Activated B cell treated with CpG ODN at 0.5 μM for 24 hours (primary cell): ENCODE measurements at regions of chr15 and their contacts with region 1.

Region 1: DNA sequence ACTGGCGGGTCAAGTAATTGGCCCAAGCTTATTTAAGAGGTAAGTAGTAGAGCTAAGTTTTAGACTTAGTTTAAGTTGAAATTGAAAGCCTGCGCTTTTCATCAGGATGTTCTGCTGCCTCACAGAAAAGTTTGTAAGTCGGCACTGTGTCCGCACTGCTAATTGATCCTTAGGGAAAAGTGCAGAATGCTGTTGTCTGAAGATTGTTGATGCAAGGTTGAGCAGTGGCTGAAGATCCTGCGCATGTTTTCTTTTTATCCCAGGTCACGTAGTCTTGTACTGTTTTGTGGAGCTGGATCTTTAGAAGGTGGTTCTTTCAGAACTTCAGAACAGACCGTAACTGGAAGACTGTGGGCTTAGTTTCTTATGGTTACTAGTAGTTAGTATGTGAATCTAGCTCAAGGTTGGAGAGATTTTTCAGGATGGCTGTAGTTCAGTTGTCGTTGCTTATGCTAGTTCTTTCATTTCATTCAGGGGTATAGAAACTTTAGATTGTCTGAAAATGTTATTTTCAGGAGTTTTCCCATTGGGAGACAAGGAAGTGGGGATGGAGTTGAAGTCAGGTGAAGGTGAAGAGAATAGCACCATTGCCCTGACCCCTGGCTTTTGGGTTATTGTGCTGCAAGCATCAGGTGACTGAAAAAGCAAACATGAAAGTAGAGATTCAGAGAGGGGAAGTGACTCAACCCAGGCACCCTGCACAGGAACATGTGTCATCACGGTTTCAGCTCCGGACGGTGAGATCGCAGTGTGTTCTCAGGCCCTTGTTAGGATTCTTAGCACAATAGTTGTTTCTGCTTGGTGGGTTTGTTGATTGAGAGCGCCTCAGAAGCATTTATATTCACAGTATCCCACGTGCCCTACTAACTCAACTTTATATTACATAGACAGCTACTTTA is 32.8 kb downstream of the AKAP13 start:
- DNase-seq: peak; percentile 50
- ATAC-seq: peak; percentile 94
- H3K4me3 Mint-ChIP-seq: peak overlapping the region; percentile 48
- H3K27ac Mint-ChIP-seq: peak overlapping the region; percentile 87
- H3K4me1 Mint-ChIP-seq: peaks cover 73% of the 10 kb centered on the region
- H3K27me3 Mint-ChIP-seq: no peaks in the 10 kb centered on the region
- CTCF ChIP-seq: no peak

Region 2: GRCh38 chr15:84797212-84797611 is 616.0 kb before region 1 on chr15:
- CTCF ChIA-PET with region 1: no interaction called
- POLR2A ChIA-PET with region 1: no interaction called
- intact Hi-C with region 1: no loop called
- DNase-seq: no peak
- ATAC-seq: no peak
- H3K4me3 Mint-ChIP-seq: no peak overlapping the region
- H3K27ac Mint-ChIP-seq: no peak overlapping the region
- H3K4me1 Mint-ChIP-seq: no peaks in the 10 kb centered on the region
- H3K27me3 Mint-ChIP-seq: no peaks in the 10 kb centered on the region
- CTCF ChIP-seq: no peak

Region 3: DNA sequence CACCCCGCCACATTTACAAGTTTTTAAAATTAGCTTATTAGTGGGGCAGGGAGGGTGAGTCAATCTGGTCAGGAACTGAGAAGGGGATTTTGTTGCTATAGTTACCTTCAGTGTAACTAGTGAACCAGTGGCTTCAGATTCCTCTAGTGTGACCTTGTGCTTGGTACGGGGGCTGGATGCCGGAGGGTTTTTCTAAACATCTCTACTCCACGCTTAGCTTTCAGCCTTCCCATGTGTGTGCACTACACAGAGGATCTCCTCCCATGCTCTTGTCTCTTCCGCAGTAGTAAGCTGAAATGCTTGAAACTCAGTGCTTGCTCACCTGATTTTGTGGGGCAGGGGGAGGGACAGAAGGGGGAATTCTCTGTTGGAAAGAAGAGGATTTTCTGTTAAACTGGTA is 100.7 kb before region 1 on chr15:
- CTCF ChIA-PET with region 1: interaction called, 50 read pairs
- POLR2A ChIA-PET with region 1: interaction called, 39 read pairs
- intact Hi-C with region 1: loop called (anchors 1 kb)
- DNase-seq: peak; percentile 53
- ATAC-seq: peak; percentile 89
- H3K4me3 Mint-ChIP-seq: peak overlapping the region; percentile 87
- H3K27ac Mint-ChIP-seq: peak overlapping the region; percentile 99
- H3K4me1 Mint-ChIP-seq: peaks cover 96% of the 10 kb centered on the region
- H3K27me3 Mint-ChIP-seq: no peaks in the 10 kb centered on the region
- CTCF ChIP-seq: no peak

Region 4: DNA sequence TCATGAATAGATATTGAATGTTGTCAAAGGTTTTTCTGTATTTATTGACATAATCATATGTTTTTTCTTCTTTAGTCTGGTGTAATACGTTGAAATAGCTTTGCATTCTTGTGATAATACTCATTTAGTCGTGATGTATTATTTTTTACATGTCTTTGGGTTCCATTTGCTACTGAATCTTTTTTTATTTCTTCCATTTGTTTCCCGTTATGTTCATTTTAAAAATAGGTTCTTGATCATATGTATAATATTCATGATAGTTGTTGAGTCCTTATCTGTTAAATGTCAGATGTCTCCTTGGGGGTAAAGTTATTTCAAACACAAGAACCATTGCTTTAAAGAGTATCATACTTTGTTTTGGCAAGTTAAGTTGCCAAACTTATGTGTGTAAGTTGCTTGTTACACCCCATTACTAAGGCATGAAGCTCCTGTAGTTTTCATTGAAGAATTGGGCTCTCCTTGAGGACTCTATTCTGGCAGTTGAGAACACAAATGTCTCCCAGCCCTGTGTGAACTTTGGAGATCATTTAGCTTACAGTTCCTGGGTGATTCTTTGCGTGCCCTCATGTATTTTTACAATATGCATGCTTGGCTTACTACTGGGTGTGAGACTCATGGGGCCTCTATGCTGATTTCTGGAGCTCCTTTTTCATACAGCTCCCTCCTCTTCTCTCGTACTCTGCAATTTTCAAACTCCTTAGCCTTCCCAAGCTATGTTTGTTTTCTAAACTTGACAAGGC is 24.5 kb before region 1 on chr15:
- CTCF ChIA-PET with region 1: interaction called, 7 read pairs
- POLR2A ChIA-PET with region 1: interaction called, 395 read pairs
- intact Hi-C with region 1: loop called (anchors 1 kb)
- DNase-seq: no peak
- ATAC-seq: no peak
- H3K4me3 Mint-ChIP-seq: no peak overlapping the region
- H3K27ac Mint-ChIP-seq: peak overlapping the region; percentile 65
- H3K4me1 Mint-ChIP-seq: peaks cover 40% of the 10 kb centered on the region
- H3K27me3 Mint-ChIP-seq: no peaks in the 10 kb centered on the region
- CTCF ChIP-seq: no peak

Region 5: GRCh38 chr15:85443593-85444087 is 30.4 kb after region 1 on chr15:
- CTCF ChIA-PET with region 1: interaction called, 7 read pairs
- POLR2A ChIA-PET with region 1: no interaction called
- intact Hi-C with region 1: loop called (anchors 1 kb)
- DNase-seq: no peak
- ATAC-seq: peak; percentile 73
- H3K4me3 Mint-ChIP-seq: peak overlapping the region; percentile 50
- H3K27ac Mint-ChIP-seq: peak overlapping the region; percentile 77
- H3K4me1 Mint-ChIP-seq: peaks cover 72% of the 10 kb centered on the region
- H3K27me3 Mint-ChIP-seq: no peaks in the 10 kb centered on the region
- CTCF ChIP-seq: no peak